Body of pancreas (tissue), 4 donors: ENCODE measurements at regions of chr18 and their contacts with region 1.

Region 1: DNA sequence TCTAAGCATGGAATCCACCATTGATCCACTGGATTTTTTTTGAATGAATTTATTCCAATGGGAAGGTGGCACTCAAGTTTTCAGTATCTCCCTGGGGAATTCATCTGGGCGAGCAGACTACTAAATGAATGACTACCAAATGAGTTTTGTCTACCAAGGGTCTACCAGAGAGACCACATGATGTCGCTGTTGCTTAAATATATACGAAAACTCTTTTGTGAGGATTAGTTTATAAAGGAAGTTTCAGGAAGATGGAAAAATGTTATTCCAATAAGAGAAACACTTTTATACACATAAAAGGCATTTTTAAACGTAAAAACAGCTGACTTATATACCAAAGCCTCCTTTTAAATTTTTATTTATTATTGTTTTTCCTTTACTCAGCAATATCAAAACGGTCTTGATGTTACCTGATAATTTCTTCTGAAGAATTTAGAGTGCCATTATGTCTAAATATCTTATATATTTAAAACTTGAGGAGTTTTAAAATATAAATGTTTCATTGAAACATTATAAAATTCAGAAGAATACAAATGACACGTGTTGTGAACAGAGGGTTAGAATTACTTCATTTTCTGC is 139.7 kb downstream of the HRH4 start:
- DNase-seq: peak in 3 of 4 donors; percentile 15 to 32 (median 28)
- ATAC-seq: no peak
- H3K4me3 ChIP-seq: no peak overlapping the region
- H3K27ac ChIP-seq: no peak overlapping the region
- H3K4me1 ChIP-seq: no peaks in the 10 kb centered on the region
- H3K27me3 ChIP-seq: no peaks in the 10 kb centered on the region
- CTCF ChIP-seq: peak; percentile 18 to 62 (median 49)
- POLR2A ChIP-seq: no peak

Region 2: DNA sequence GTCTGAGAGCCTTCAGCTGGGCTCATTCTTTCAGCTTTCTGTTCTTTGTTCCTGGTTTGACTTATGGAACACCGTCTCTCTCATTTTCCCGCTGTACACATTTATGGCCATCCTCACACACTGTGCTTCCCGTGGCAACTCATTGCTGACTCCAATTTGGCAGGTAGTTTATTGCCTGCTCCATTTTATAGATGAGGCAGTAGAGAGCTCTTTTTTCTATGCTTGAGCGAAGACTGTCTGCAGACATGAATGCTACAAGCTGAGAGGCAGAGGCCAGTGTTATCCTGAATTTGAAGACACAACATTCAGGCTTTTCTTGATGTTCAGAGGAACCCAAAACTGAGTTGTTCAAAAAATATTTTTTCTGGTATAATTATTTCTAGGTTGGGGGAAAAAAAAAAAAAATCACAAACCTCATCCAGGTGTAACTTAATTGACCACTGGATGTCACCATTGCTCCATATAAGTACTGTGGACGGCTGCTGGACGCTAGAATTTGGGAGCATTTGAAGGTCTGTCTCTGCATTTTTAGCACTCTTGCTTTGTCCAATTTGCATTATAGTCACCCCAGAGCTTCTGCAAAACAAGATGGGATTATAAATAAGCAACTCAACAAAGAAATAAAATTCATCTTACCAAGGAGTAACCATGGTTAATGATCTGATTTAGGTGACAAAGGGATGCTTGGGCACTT is 56.2 kb before region 1 on chr18:
- intact Hi-C with region 1: loop called (anchors 10 kb)
- DNase-seq: no peak
- ATAC-seq: no peak
- H3K4me3 ChIP-seq: no peak overlapping the region
- H3K27ac ChIP-seq: no peak overlapping the region
- H3K4me1 ChIP-seq: no peaks in the 10 kb centered on the region
- H3K27me3 ChIP-seq: no peaks in the 10 kb centered on the region
- CTCF ChIP-seq: peak; percentile 14 to 52 (median 44)
- POLR2A ChIP-seq: no peak

Region 3: GRCh38 chr18:24659827-24660720 is 59.9 kb after region 1 on chr18:
- intact Hi-C with region 1: loop called (anchors 10 kb)
- DNase-seq: peak; percentile 12 to 29 (median 21)
- ATAC-seq: peak; percentile 35
- H3K4me3 ChIP-seq: no peak overlapping the region
- H3K27ac ChIP-seq: peak overlapping the region in 1 of 4 donors; percentile 35
- H3K4me1 ChIP-seq: peaks cover 13% of the 10 kb centered on the region
- H3K27me3 ChIP-seq: no peaks in the 10 kb centered on the region
- CTCF ChIP-seq: no peak
- POLR2A ChIP-seq: no peak

Region 4: DNA sequence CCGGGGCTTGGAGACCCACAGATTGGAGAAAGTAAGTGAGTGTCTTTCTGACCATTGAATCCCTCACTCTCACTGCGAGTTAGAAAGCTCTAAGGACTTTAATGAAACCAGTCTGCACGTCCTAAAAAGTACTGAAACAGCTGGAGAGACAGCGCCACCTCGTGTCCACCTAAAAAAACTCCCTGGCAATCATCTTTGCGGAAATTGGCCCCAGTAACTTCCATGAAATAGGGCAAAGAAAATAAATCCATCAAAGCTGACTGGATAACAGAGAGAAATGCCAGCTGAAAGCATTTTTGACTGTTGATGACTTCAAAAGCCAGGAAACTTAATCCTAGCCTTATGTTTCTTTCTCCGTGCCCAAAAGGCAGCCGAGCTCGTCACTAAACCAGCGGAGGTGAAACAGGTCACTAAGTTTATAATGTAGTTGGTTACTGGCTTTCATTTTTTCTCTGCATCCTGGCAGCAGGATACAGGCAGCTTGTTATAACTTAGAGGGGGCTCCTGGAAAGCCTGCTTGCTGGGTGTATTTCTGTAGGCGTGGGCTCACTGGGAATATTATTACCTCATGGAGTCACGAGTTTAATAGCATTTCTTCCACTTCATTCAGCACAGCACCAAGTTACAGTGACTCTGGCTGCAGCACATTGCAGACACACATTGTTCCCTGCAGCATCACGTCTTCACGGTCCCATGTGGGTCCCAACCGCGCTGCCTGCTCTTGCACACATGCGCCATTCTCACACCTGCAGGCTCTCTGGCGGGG is 126.7 kb after region 1 on chr18:
- intact Hi-C with region 1: loop called (anchors 10 kb)
- DNase-seq: peak; percentile 60 to 70 (median 67)
- ATAC-seq: peak; percentile 55
- H3K4me3 ChIP-seq: no peak overlapping the region
- H3K27ac ChIP-seq: no peak overlapping the region
- H3K4me1 ChIP-seq: no peaks in the 10 kb centered on the region
- H3K27me3 ChIP-seq: no peaks in the 10 kb centered on the region
- CTCF ChIP-seq: peak; percentile 66 to 81 (median 77)
- POLR2A ChIP-seq: no peak